Psoas muscle (tissue), 8 donors: ENCODE measurements at regions of chr5 and their contacts with region 1.

Region 1: DNA sequence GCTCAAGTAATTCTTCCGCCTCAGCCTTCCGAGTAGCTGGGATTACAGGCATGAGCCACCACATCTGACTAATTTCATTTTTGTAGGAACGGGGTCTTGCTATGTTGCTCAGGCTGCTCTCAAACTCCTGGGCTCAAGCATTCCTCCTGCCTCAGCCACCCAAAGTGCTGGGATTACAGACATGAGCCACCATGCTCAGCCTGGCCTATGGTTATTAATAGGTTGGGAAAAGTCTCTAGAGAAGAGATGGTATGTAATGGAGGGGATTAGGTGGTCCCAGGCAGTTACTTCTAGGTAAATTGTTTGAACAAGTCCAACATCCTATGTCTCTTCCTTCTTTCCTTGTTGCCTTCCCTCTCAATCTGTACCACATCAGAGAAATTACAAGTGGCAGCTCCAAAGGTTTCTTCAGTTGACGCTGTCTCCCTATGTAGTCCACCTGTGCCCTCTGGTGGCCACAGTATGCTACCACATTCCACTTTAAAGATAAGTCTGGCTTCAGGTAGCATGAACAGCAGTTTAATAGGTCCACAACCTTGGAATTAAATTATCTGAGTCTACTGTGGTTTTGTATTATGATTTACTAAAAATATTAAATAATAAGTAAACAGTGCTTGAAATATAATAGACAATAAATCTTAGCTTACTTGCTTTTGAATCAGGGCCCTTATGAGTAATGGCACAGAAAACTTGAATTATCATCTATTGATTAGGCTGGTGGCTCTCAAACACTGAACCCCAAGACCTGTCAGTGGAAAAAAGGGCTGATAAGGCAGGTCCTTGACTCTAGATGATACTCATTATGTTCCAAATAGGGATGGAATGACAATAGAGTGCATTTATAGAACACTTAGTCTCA is 9.7 kb downstream of the TIGD6 start:
- DNase-seq: peak; percentile 61 to 72
- ATAC-seq: peak; percentile 85 to 89 (median 87)
- H3K4me3 ChIP-seq: no peak overlapping the region
- H3K27ac ChIP-seq: no peak overlapping the region
- H3K4me1 ChIP-seq: peaks cover 13% of the 10 kb centered on the region
- H3K27me3 ChIP-seq: no peaks in the 10 kb centered on the region
- CTCF ChIP-seq: peak; percentile 96

Region 2: GRCh38 chr5:149636851-149637246 is 353.9 kb before region 1 on chr5:
- intact Hi-C with region 1: loop called (anchors 2 to 5 kb)
- DNase-seq: no peak
- ATAC-seq: peak; percentile 68 to 74 (median 73)
- H3K4me3 ChIP-seq: no peak overlapping the region
- H3K27ac ChIP-seq: no peak overlapping the region
- H3K4me1 ChIP-seq: peaks cover 29% of the 10 kb centered on the region
- H3K27me3 ChIP-seq: no peaks in the 10 kb centered on the region
- CTCF ChIP-seq: peak; percentile 85

Region 3: DNA sequence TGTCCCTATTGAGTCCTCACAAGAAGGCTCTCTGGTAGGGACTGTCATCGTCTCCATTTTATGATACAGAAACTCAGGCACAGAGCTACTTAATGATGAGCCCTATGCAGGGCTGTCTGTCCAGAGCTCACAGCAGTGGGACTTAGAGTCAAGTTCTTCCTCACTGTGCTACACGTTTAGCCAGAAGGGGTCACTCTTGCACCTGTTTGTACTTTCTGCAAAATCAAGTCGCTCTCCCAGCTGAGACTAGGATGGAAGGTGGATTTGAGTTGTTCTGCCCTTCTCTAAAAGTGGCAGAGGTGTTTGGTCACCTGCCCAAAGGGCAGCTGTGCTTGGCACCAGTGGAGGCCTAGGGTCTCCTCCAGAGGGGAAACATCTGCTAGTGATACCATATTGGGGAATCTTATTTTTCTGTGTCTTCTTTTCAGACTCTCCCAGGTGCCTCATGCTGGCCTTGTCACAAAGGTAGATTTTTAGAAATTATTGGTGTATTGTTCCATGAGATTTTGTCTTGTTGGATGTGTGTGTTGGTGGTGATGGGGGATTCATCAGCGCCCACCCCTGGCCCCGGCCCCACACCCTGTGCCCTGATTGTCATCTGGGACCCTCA is 156.4 kb before region 1 on chr5:
- intact Hi-C with region 1: loop called (anchors 1 to 2 kb)
- DNase-seq: no peak
- ATAC-seq: peak; percentile 47 to 80 (median 68)
- H3K4me3 ChIP-seq: no peak overlapping the region
- H3K27ac ChIP-seq: no peak overlapping the region
- H3K4me1 ChIP-seq: peaks cover 6% of the 10 kb centered on the region
- H3K27me3 ChIP-seq: no peaks in the 10 kb centered on the region
- CTCF ChIP-seq: peak; percentile 69

Region 4: DNA sequence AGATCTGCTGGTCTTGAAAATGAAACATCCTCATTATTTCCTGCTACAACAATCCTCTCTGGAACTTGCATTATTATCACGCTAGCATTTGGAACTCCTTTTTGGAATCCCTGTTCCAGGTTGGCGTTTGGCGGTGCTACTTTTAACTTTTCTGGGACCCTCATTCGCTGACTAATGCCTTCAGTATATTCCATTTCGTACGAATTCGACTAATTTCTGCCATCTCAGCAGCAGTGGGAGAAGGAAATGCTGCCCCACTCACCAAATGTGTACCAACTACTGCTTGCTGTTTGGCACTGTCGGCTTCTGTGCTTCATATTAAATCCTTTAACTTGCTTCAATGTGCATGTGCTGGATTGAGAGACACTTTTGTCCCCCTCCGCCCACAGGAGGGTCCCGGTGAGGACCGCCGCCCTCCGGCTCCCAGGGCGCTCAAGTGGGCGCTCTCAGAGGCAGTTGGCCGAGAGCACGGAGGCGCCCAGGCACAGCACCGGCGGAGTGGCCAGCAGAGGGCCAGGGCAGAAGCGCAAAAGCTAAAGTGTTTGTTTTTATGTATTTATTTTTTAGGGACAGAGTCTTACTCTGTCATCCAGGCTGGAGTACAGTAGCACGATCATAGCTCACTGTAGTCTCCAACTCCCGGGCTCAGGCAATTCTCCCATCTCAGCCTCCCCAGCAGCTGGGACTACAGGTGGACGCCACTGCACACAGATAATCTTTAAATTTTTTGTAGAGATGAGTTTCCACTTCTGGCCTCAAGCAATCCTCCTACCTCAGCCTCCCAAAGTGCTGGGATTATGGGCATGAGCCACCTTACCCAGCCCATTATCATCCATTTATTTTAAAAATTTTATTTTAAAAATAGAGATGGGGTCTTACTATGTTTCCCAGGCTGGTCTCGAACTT is 58.0 kb before region 1 on chr5:
- intact Hi-C with region 1: loop called in 1 of 2 experiments (anchors 5 kb)
- DNase-seq: peak; percentile 40 to 73
- ATAC-seq: peak; percentile 92 to 96 (median 94)
- H3K4me3 ChIP-seq: peak overlapping the region; percentile 67
- H3K27ac ChIP-seq: peak overlapping the region; percentile 73
- H3K4me1 ChIP-seq: peaks cover 11% of the 10 kb centered on the region
- H3K27me3 ChIP-seq: no peaks in the 10 kb centered on the region
- CTCF ChIP-seq: peak; percentile 58